ENCODE measurements at regions of chr10 and their contacts with region 1.

Region 1: DNA sequence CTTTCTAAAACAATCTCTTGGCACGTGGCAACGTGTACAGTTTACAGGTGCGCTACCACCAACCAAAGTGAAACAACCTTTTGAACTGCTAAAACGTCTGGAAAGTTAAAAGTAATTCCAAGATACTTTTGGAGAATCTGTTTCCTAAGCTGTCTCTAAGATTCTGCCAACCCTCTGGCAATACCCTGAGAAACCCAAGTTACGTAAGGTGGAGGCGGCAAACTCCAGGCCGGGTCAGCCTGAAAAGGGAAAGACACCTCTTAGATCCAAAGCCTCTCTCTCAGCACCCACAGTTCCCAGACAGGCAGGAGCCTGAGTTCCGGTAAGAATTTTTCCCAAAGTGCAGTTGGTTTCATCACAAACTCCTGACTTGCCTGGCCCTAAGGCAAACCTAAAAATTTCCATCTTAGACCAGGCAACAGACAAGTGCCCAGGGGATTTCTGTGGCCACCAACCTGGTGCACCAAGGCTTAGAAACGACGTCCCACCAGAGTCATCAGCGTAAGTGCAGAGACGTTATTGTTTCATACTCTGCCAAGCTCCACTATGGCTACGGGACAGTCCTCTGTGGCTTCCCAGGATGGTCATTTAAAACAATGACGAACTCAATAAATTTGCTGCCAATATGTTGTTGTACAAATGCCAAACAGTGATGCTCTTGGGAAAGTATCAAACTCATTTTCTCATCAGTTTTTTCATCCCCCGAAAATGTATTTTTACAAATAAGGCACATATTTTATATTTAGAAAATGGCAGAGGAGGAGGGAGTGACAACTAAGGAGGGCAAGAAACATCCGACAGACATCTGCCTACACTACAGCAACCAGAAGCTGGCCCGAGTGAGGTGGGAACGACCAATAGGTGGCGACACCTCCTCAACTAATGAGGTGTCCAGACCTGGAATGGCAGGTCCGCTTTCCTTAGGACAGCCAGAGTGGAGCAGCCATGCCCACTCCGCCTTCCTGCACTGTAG is 205.8 kb upstream of the FRMD4A start:
- DNase-seq: no peak
- H3K4me3 ChIP-seq: no peak overlapping the region
- CTCF ChIP-seq: peak; percentile 68

Region 2: DNA sequence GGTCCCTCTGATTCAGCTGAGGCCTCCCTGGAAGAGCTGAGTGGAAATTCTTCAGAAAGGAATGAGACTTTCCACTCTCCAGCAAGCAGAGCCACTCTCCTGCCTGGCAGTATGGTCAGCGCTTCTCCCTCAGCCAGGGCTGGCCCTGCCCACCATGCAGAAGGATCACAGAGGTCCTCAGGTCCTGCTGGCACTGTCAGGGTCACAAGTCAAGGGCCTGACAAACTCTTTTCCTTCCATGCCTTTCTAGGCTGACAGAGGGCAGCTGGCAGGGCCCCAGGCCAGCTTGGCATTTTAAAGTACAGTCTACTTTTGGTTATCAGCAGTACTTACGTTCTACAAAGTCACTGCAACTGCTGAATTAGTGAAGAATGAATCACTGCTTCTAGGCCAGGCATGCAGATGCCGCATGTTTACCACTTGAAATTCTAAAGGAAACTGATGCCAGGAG is 86.5 kb before region 1 on chr10:
- CTCF ChIA-PET with region 1: no interaction called
- POLR2A ChIA-PET with region 1: no interaction called
- DNase-seq: no peak
- H3K4me3 ChIP-seq: no peak overlapping the region
- CTCF ChIP-seq: no peak

Region 3: GRCh38 chr10:14523286-14523685 is 13.2 kb before region 1 on chr10:
- CTCF ChIA-PET with region 1: interaction called, 12 read pairs
- POLR2A ChIA-PET with region 1: no interaction called
- DNase-seq: no peak
- H3K4me3 ChIP-seq: no peak overlapping the region
- CTCF ChIP-seq: no peak

Region 4: GRCh38 chr10:14553448-14553847 is 16.9 kb after region 1 on chr10:
- CTCF ChIA-PET with region 1: interaction called, 17 read pairs
- POLR2A ChIA-PET with region 1: no interaction called
- DNase-seq: peak; percentile 37
- H3K4me3 ChIP-seq: no peak overlapping the region
- CTCF ChIP-seq: no peak

Measured in AG04449 (cell line).